Ovary (tissue), 10 donors: ENCODE measurements at regions of chr5 and their contacts with region 1.

Region 1: GRCh38 chr5:29169886-29170285 is 2023.6 kb upstream of the CDH6 start:
- DNase-seq: no peak
- H3K4me3 ChIP-seq: no peak overlapping the region
- H3K27ac ChIP-seq: no peak overlapping the region
- H3K4me1 ChIP-seq: no peaks in the 10 kb centered on the region
- H3K27me3 ChIP-seq: no peaks in the 10 kb centered on the region
- CTCF ChIP-seq: no peak
- EP300 ChIP-seq: no peak
- POLR2A ChIP-seq: no peak

Region 2: DNA sequence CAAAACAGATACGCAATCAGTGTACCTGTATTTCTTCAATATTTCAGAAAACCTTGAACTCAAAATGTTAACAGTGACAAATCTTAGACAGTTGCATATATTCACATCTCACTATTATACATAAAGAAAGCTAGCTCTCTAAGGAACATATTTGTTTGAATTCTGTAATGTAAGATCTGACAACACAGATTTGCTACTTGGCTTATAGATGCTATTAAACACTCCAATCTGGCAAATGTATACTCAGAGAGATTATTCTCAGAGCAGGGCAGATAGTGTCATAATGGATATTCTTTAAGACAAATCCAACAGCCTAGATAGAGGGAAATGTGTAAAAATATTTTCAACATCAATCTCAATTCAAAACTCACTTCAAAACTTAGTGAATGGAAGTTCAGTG is 1337.0 kb before region 1 on chr5:
- intact Hi-C with region 1: no loop called
- DNase-seq: no peak
- H3K4me3 ChIP-seq: no peak overlapping the region
- H3K27ac ChIP-seq: no peak overlapping the region
- H3K4me1 ChIP-seq: no peaks in the 10 kb centered on the region
- H3K27me3 ChIP-seq: no peaks in the 10 kb centered on the region
- CTCF ChIP-seq: no peak
- EP300 ChIP-seq: no peak
- POLR2A ChIP-seq: no peak

Region 3: GRCh38 chr5:29148581-29148980 is 21.3 kb before region 1 on chr5:
- intact Hi-C with region 1: loop called in 1 of 4 experiments (anchors 2 kb)
- DNase-seq: no peak
- H3K4me3 ChIP-seq: no peak overlapping the region
- H3K27ac ChIP-seq: no peak overlapping the region
- H3K4me1 ChIP-seq: no peaks in the 10 kb centered on the region
- H3K27me3 ChIP-seq: no peaks in the 10 kb centered on the region
- CTCF ChIP-seq: no peak
- EP300 ChIP-seq: no peak
- POLR2A ChIP-seq: no peak